Activated CD4-positive, alpha-beta memory T cell treated with anti-CD3 and anti-CD28 coated beads, Interleukin-2, amount 10 ng/mL, durations not matched to agents 7 days and 5 days (primary cell): ENCODE measurements at regions of chr10 and their contacts with region 1.

Region 1: GRCh38 chr10:110497438-110498086 is at the start of gene DUSP5:
- DNase-seq: peak; percentile 97
- H3K4me3 Mint-ChIP-seq: peak within 1 kb of the TSS; percentile 99
- H3K27ac Mint-ChIP-seq: peak within 1 kb of the TSS; percentile 96
- H3K4me1 Mint-ChIP-seq: peaks cover 52% of the 10 kb centered on the region
- H3K27me3 Mint-ChIP-seq: no peaks in the 10 kb centered on the region
- total RNA-seq, gene DUSP5: 143 TPM

Region 2: DNA sequence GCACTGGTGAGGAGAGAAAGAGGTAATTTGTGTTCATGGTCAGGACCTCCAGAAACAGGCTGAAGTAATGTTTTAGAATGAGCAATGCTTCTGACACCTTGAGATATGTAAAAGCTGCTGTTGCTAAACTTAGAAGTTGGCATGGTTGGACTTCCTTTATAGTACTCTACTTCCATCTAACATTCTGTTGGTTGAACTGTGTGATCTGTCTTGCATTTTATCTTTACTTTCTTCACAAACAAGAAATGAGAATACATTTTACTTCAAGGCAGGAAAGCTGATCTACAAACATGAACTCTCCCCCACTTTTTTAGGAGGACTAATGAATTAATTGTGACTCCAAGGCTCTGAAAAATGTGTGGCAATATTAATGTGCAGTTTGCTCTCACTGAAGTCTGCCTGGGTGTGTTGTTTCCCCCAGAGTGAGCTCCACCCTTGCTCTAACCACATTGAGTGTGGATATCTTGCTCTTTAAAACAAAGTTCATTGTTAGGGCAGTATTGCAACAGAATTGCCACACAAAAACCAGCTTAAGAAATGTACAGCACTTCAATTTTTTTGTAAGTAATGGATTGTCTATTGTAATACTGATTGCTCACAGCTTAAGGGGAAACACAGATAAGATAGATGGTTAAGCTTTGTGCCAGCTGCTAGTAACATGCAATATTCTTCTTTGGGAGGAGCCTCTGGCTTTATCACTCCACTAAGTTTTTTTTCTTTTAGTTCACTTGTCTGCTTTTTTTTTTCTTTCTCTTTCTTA is 420.8 kb before region 1 on chr10:
- CTCF ChIA-PET with region 1: no interaction called
- POLR2A ChIA-PET with region 1: no interaction called
- DNase-seq: peak; percentile 54
- H3K4me3 Mint-ChIP-seq: peak overlapping the region; percentile 89
- H3K27ac Mint-ChIP-seq: peak overlapping the region; percentile 99
- H3K4me1 Mint-ChIP-seq: peaks cover 81% of the 10 kb centered on the region
- H3K27me3 Mint-ChIP-seq: no peaks in the 10 kb centered on the region

Region 3: DNA sequence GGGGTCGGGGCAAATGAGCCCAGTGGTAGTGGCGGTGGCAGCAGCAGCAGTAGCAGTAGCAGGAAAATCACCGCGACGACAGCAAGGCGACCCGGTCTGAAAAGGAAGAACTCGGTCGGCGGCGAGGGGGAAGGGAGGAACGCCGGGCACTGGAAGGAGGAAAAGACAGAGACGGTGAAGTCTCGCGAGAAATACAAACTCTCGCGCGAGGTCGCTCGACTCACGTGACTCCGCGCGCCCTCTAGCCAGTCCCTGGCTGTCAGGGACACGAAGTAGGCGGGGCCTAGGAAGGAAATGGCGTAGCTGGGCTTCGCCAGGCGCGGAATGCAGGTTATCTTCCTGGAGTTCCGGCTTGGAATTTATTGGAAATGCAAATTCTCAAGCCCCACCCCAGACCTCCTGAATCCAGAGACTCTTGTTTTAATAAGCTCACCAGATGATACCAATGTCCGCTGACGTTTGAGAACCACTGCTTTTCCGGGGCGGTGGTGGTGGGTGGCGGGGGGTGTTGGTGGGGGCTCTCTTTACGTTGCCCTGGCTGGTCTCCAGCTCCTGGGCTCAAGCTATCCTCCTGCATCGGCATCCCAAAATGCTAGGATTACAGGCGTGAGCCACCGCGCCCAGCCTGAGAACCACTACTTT is 192.7 kb before region 1 on chr10 and contains the start of gene SMNDC1:
- CTCF ChIA-PET with region 1: interaction called, 43 read pairs
- POLR2A ChIA-PET with region 1: interaction called, 49 read pairs
- DNase-seq: peak; percentile 98
- H3K4me3 Mint-ChIP-seq: peak within 1 kb of the TSS; percentile 97
- H3K27ac Mint-ChIP-seq: peak within 1 kb of the TSS; percentile 96
- H3K4me1 Mint-ChIP-seq: peaks cover 55% of the 10 kb centered on the region
- H3K27me3 Mint-ChIP-seq: no peaks in the 10 kb centered on the region
- total RNA-seq, gene SMNDC1: 40.8 to 45.6 TPM

Region 4: GRCh38 chr10:110336111-110336721 is 161.3 kb before region 1 on chr10:
- CTCF ChIA-PET with region 1: interaction called, 5 read pairs
- POLR2A ChIA-PET with region 1: interaction called, 11 read pairs
- DNase-seq: no peak
- H3K4me3 Mint-ChIP-seq: no peak overlapping the region
- H3K27ac Mint-ChIP-seq: peak overlapping the region; percentile 81
- H3K4me1 Mint-ChIP-seq: peaks cover 52% of the 10 kb centered on the region
- H3K27me3 Mint-ChIP-seq: no peaks in the 10 kb centered on the region

Region 5: GRCh38 chr10:110378006-110378405 is 119.6 kb before region 1 on chr10:
- CTCF ChIA-PET with region 1: no interaction called
- POLR2A ChIA-PET with region 1: no interaction called
- DNase-seq: no peak
- H3K4me3 Mint-ChIP-seq: no peak overlapping the region
- H3K27ac Mint-ChIP-seq: no peak overlapping the region
- H3K4me1 Mint-ChIP-seq: peaks cover 28% of the 10 kb centered on the region
- H3K27me3 Mint-ChIP-seq: peaks cover 1% of the 10 kb centered on the region

Region 6: GRCh38 chr10:110414563-110415309 is 82.8 kb before region 1 on chr10:
- CTCF ChIA-PET with region 1: interaction called, 6 read pairs
- POLR2A ChIA-PET with region 1: interaction called, 152 read pairs
- DNase-seq: peak; percentile 95
- H3K4me3 Mint-ChIP-seq: peak overlapping the region; percentile 40
- H3K27ac Mint-ChIP-seq: peak overlapping the region; percentile 88
- H3K4me1 Mint-ChIP-seq: peaks cover 94% of the 10 kb centered on the region
- H3K27me3 Mint-ChIP-seq: no peaks in the 10 kb centered on the region

Region 7: DNA sequence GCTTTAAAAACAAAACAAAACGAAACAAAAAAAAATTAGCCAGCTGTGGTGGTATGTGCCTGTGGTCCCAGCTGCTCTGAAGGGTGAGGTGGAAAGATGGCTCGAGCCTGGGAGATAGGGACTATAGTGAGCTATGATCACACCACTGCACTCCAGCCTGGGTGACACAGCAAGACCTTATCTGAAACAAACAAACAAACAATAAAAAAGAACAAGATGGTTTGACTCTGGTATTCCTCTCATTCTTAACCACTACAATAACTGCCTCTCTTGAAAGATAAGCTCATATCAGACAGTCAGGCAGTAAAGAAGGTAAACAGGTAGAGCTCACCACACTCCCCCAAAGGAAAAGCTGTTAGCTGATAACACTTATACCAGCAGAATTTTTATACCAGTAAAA is 13.9 kb before region 1 on chr10:
- CTCF ChIA-PET with region 1: interaction called, 6 read pairs
- POLR2A ChIA-PET with region 1: interaction called, 10 read pairs
- DNase-seq: no peak
- H3K4me3 Mint-ChIP-seq: no peak overlapping the region
- H3K27ac Mint-ChIP-seq: no peak overlapping the region
- H3K4me1 Mint-ChIP-seq: peaks cover 12% of the 10 kb centered on the region
- H3K27me3 Mint-ChIP-seq: peaks cover 4% of the 10 kb centered on the region

Region 8: DNA sequence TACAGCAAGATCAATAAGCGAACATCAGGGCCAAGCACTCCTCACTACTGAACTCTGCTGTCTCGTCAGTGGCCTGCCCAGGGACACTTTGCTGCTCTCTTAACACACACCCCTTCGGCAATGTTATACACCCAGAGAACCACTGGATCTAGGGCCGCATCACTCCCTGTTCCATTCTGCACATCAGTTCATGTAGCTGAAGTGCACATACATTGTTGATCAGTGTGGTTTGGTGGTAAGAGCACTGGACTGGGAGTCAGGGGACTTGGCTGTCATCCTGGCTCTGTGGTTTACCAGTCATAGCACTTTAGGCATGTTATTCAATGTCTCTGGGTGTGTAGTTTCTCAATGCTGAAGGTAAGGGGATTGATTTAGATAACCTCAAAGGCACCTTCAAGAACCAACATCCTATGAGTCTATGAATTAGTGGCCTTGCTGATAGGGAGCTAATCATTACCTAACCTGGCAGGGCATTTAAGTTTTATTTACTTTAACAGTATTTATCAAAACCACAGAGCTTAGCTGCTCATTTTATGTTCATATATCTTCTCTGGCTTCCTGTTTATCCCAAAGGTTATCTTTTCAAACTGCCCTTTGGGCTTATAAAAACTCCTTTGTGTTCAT is 24.9 kb after region 1 on chr10:
- CTCF ChIA-PET with region 1: no interaction called
- POLR2A ChIA-PET with region 1: interaction called, 10 read pairs
- DNase-seq: peak; percentile 60
- H3K4me3 Mint-ChIP-seq: no peak overlapping the region
- H3K27ac Mint-ChIP-seq: peak overlapping the region; percentile 37
- H3K4me1 Mint-ChIP-seq: peaks cover 51% of the 10 kb centered on the region
- H3K27me3 Mint-ChIP-seq: no peaks in the 10 kb centered on the region

Region 9: DNA sequence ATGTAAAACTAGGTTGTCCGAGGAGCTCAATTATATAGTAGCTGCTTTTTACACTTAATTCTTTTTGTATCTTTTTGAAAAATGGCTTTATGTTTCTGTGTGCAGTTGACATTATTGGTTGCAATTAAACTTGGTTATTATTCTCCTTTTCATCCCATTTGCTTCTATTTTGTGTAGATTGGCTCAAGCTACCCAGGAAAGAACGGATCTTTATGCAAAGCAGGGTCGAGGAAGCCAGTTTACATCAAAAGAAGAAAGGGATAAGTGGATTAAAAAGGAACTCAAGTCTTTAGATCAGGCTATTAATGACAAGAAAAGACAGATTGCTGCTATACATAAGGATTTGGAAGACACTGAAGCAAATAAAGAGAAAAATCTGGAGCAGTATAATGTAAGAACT is 86.4 kb after region 1 on chr10:
- CTCF ChIA-PET with region 1: no interaction called
- POLR2A ChIA-PET with region 1: no interaction called
- DNase-seq: no peak
- H3K4me3 Mint-ChIP-seq: no peak overlapping the region
- H3K27ac Mint-ChIP-seq: no peak overlapping the region
- H3K4me1 Mint-ChIP-seq: peaks cover 2% of the 10 kb centered on the region
- H3K27me3 Mint-ChIP-seq: no peaks in the 10 kb centered on the region